ENCODE measurements at regions of chr3 and their contacts with region 1.

Region 1: GRCh38 chr3:113745273-113746068 is 578 bp downstream of the NAA50 start:
- DNase-seq: peak; percentile 67 to 86
- ATAC-seq: peak; percentile 76 to 80 (median 78)
- H3K4me3 ChIP-seq: peak overlapping the region; percentile 89
- H3K27ac ChIP-seq: peak overlapping the region; percentile 99
- H3K4me1 ChIP-seq: peaks cover 63% of the 10 kb centered on the region
- H3K27me3 ChIP-seq: no peaks in the 10 kb centered on the region
- CTCF ChIP-seq: peak; percentile 53

Region 2: DNA sequence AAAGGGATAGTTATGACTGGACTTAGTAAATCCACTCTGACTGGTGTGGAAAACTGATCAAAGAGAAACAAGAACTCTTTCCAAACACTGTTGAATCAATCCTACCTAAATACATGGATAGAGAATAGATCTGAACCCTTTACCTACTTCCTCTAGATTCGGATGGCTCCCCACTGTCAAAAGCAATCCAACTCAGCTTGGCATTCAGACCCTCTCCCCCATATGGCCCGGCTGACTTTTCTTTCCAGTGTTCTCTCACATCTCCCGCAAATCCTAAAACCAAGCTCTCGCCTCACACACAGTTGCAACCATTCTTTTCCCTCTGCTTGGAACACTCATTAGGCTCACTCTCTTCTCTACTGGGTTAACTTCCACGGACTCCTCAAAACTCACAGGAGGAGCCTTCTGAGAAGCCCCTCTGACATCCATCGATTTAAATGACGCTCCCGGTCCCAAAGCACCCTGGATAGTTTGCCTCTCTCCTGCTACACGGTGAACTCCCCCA is 231.2 kb before region 1 on chr3:
- intact Hi-C with region 1: loop called in 1 of 2 experiments (anchors 10 kb)
- DNase-seq: no peak
- ATAC-seq: peak in 3 of 4 donors; percentile 3 to 21 (median 10)
- H3K4me3 ChIP-seq: peak overlapping the region; percentile 99
- H3K27ac ChIP-seq: peak overlapping the region; percentile 78
- H3K4me1 ChIP-seq: peaks cover 10% of the 10 kb centered on the region
- H3K27me3 ChIP-seq: no peaks in the 10 kb centered on the region
- CTCF ChIP-seq: no peak

Region 3: GRCh38 chr3:113626503-113627371 is 118.7 kb before region 1 on chr3:
- intact Hi-C with region 1: loop called in 1 of 2 experiments (anchors 5 kb)
- DNase-seq: peak; percentile 30 to 64
- ATAC-seq: peak; percentile 71 to 92 (median 82)
- H3K4me3 ChIP-seq: peak overlapping the region; percentile 23
- H3K27ac ChIP-seq: peak overlapping the region; percentile 25
- H3K4me1 ChIP-seq: peaks cover 27% of the 10 kb centered on the region
- H3K27me3 ChIP-seq: no peaks in the 10 kb centered on the region
- CTCF ChIP-seq: peak; percentile 92

Region 4: GRCh38 chr3:113696658-113697499 is 48.6 kb before region 1 on chr3:
- intact Hi-C with region 1: loop called (anchors 2 to 5 kb)
- DNase-seq: peak; percentile 99
- ATAC-seq: peak; percentile 91 to 97 (median 96)
- H3K4me3 ChIP-seq: peak overlapping the region; percentile 81
- H3K27ac ChIP-seq: peak overlapping the region; percentile 99
- H3K4me1 ChIP-seq: peaks cover 43% of the 10 kb centered on the region
- H3K27me3 ChIP-seq: no peaks in the 10 kb centered on the region
- CTCF ChIP-seq: no peak

Region 5: GRCh38 chr3:113847664-113848449 is 102.4 kb after region 1 on chr3:
- intact Hi-C with region 1: no loop called
- DNase-seq: no peak
- ATAC-seq: no peak
- H3K4me3 ChIP-seq: no peak overlapping the region
- H3K27ac ChIP-seq: no peak overlapping the region
- H3K4me1 ChIP-seq: no peaks in the 10 kb centered on the region
- H3K27me3 ChIP-seq: no peaks in the 10 kb centered on the region
- CTCF ChIP-seq: no peak

Region 6: GRCh38 chr3:113968986-113969385 is 223.5 kb after region 1 on chr3:
- intact Hi-C with region 1: no loop called
- DNase-seq: no peak
- ATAC-seq: peak; percentile 76 to 94 (median 89)
- H3K4me3 ChIP-seq: no peak overlapping the region
- H3K27ac ChIP-seq: peak overlapping the region; percentile 40
- H3K4me1 ChIP-seq: no peaks in the 10 kb centered on the region
- H3K27me3 ChIP-seq: no peaks in the 10 kb centered on the region
- CTCF ChIP-seq: no peak

Measured in psoas muscle (tissue), 8 donors.